ENCODE measurements at regions of chr1 and their contacts with region 1.

Region 1: GRCh38 chr1:33295450-33296081 is 25.3 kb downstream of the A3GALT2 start:
- DNase-seq: peak; percentile 86
- ATAC-seq: peak; percentile 91
- H3K4me3 ChIP-seq: no peak overlapping the region
- H3K4me3 Mint-ChIP-seq: no peak overlapping the region
- H3K27ac ChIP-seq: no peak overlapping the region
- H3K27ac Mint-ChIP-seq: peak overlapping the region; percentile 20
- H3K4me1 ChIP-seq: no peaks in the 10 kb centered on the region
- H3K4me1 Mint-ChIP-seq: no peaks in the 10 kb centered on the region
- H3K27me3 ChIP-seq: no peaks in the 10 kb centered on the region
- H3K27me3 Mint-ChIP-seq: no peaks in the 10 kb centered on the region
- CTCF ChIP-seq: peak; percentile 93

Region 2: DNA sequence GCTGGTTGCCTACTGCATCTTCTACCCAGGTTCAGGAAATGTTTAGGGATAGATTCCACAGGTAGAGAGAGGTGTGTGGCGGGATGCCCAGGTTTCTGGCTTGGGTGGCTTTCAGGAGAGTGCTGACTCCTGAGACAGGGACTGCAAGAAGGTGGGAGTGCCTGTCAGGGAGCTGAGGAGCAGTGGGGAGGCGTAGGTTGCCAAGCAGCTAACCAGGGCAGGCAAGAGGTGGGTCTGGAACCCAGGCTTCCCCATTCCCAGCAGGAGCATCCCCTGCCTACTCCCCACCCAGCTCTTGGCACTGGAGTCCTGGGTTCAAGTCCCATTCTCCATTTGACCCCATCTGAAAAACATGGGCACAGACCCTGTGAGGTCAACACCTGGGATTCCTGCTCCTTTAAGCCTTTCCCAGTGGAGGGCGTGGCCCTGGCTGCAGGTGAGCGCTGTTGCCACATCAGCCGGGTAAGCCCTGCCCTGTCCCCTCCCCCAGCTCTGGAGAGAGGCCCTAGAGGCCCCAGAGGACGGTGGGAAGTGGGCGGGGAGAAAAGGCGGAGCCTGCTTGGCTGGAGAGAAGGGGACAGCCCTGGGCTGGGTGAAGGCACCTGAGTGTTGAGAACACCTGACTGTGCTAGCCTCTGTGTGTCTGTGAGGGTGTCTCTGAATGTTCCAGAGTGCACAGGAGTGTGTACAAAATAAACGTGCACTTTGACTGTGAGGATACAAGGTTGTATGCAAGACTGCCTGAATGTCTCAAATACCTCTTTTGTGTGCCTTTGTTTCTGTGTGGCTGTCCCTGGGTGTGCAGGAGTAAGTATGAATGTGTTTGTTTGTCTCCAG is 579.0 kb before region 1 on chr1:
- CTCF ChIA-PET with region 1: no interaction called
- POLR2A ChIA-PET with region 1: no interaction called
- intact Hi-C with region 1: no loop called
- DNase-seq: peak; percentile 48
- ATAC-seq: peak; percentile 46
- H3K4me3 ChIP-seq: no peak overlapping the region
- H3K4me3 Mint-ChIP-seq: no peak overlapping the region
- H3K27ac ChIP-seq: no peak overlapping the region
- H3K27ac Mint-ChIP-seq: no peak overlapping the region
- H3K4me1 ChIP-seq: peaks cover 6 to 13% of the 10 kb centered on the region in 2 donors
- H3K4me1 Mint-ChIP-seq: peaks cover 7% of the 10 kb centered on the region
- H3K27me3 ChIP-seq: peaks cover 0 to 27% (median 3%) of the 10 kb centered on the region in 4 experiments
- H3K27me3 Mint-ChIP-seq: peaks cover 16% of the 10 kb centered on the region
- CTCF ChIP-seq: no peak

Region 3: GRCh38 chr1:33263890-33264504 is 31.6 kb before region 1 on chr1:
- CTCF ChIA-PET with region 1: no interaction called
- POLR2A ChIA-PET with region 1: no interaction called
- intact Hi-C with region 1: no loop called
- DNase-seq: no peak
- ATAC-seq: no peak
- H3K4me3 ChIP-seq: no peak overlapping the region
- H3K4me3 Mint-ChIP-seq: no peak overlapping the region
- H3K27ac ChIP-seq: no peak overlapping the region
- H3K27ac Mint-ChIP-seq: no peak overlapping the region
- H3K4me1 ChIP-seq: peaks cover 0 to 2% of the 10 kb centered on the region in 2 donors
- H3K4me1 Mint-ChIP-seq: peaks cover 16% of the 10 kb centered on the region
- H3K27me3 ChIP-seq: no peaks in the 10 kb centered on the region
- H3K27me3 Mint-ChIP-seq: no peaks in the 10 kb centered on the region
- CTCF ChIP-seq: no peak

Region 4: DNA sequence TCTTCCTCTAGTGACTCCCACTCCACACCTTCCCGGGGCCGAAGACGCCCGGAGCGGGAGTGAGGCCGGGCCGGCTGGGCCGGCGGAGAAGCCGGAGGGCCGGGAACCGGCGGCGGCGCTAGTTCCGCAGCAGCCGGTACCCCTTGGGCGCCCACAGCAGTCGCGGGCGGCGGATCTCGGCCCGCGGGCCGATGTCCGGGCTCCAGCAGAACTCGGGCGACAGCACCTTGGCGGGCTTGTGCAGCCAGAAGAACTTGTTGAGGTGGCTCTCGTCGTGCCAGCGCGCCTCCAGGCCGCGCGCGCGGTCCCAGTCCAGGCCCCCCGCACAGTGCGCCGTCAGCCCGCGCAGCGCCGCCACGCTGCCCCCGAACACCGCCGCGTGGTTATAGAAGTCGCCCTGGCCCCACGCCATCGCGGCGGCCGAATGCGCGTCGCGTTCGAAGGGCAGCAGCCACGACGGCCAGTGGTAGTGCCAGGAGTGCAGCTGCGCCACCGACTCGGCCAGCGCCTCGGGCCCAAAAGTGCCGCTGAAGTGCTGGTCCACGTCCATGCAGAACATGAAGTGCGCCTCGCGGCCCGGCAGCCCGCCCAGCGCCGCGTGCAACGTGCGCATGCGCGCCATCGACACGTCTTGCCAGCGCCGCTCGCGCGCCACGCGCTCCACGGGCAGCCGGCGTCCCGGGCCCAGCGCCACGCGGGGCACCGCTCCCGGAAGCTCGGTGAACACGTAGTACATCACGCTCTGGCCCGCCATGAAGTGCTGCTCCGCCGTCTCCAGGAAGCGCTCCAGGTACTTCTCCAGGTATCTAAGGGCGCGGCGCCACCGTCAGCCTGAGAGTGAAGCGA is 11.3 kb after region 1 on chr1:
- CTCF ChIA-PET with region 1: interaction called, 18 read pairs
- POLR2A ChIA-PET with region 1: no interaction called
- intact Hi-C with region 1: no loop called
- DNase-seq: peak; percentile 24
- ATAC-seq: no peak
- H3K4me3 ChIP-seq: no peak overlapping the region
- H3K4me3 Mint-ChIP-seq: no peak overlapping the region
- H3K27ac ChIP-seq: no peak overlapping the region
- H3K27ac Mint-ChIP-seq: no peak overlapping the region
- H3K4me1 ChIP-seq: peaks cover 3 to 11% of the 10 kb centered on the region in 2 donors
- H3K4me1 Mint-ChIP-seq: peaks cover 5% of the 10 kb centered on the region
- H3K27me3 ChIP-seq: peaks cover 0 to 10% (median 3%) of the 10 kb centered on the region in 4 experiments
- H3K27me3 Mint-ChIP-seq: peaks cover 20% of the 10 kb centered on the region
- CTCF ChIP-seq: no peak

Region 5: DNA sequence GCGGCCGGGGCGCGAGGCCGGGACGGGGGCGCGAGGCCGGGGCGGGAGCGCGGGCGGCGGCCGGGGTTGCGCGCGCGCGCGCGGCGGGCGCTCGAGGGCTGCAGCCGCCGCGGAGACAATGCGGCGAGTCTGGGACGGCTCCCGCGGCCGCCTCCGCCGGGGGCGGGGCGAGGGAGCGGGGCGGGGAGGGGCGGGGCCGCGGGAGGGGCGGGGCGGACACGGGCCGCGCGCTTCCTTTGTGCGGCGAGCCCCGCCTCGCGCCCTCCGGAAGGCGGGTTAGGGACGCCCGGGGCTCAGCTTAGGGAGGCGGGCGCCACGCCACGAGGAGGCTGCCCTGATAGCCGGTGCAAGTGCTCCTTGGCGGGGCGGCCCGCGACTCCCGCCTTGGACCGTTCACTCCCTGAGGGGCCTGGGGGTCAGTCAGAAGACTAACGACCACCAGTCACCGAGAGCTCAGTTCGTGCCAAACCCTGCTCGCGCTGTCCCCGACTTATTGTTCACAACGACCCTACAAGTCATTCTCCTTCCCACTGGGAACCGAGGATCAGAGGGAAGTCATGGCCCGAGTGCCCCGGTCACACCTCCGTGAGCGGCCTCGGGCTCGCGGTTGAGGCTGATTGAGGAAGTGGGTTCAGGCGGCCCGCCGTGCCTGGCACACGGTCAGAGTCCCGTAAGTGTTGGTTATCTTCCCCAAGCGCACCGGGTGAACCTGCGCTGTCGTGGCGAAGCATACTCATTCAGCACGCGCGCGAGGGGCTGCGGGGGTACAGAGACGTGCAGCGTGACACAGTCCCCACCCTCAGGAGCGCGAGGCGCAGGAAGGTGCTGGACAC is 54.4 kb after region 1 on chr1:
- CTCF ChIA-PET with region 1: interaction called, 7 read pairs
- POLR2A ChIA-PET with region 1: no interaction called
- intact Hi-C with region 1: loop called (anchors 5 kb)
- DNase-seq: peak; percentile 88
- ATAC-seq: peak; percentile 86
- H3K4me3 ChIP-seq: peak overlapping the region; percentile 45 to 76 (median 74)
- H3K4me3 Mint-ChIP-seq: peak overlapping the region; percentile 98
- H3K27ac ChIP-seq: peak overlapping the region; percentile 71 to 81
- H3K27ac Mint-ChIP-seq: peak overlapping the region; percentile 90
- H3K4me1 ChIP-seq: peaks cover 16 to 20% of the 10 kb centered on the region in 2 donors
- H3K4me1 Mint-ChIP-seq: peaks cover 36% of the 10 kb centered on the region
- H3K27me3 ChIP-seq: peaks cover 0 to 3% (median 0%) of the 10 kb centered on the region in 4 experiments
- H3K27me3 Mint-ChIP-seq: no peaks in the 10 kb centered on the region
- CTCF ChIP-seq: no peak

Region 6: DNA sequence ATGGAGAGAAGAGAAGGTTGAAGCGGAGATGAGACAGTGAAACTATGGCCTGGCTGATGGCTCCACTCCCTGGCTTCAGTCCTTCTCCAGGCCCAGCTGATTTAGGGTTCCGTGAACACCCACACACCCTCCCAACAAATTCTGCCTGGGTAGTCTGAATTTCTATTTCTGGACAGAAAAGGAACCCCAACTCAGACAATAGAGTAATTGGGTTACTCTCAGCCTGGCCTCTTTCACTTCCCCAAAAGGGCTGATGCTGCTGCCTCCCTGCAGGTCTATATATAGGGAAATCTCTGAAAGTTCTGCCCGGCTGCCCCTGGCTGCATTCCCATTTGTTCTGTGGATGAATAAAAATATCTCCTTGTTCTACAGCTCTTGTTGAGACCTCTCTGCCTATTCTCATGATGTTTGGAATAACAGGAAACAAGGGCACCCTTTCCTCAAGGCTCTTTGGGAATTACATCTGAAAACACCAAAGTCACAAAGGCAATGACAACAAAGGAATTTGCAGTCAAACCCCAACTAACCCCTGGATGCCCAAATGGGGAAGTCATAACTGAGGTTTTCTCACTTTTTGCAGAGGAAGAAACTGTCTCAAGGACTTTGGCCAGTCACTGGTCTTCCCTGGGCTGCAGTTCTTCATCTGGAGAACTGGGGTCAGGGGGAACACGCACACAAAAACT is 165.5 kb after region 1 on chr1:
- CTCF ChIA-PET with region 1: interaction called, 210 read pairs
- POLR2A ChIA-PET with region 1: no interaction called
- intact Hi-C with region 1: no loop called
- DNase-seq: peak; percentile 80
- ATAC-seq: peak; percentile 93
- H3K4me3 ChIP-seq: peak overlapping the region in 3 of 5 experiments; percentile 10 to 25 (median 21)
- H3K4me3 Mint-ChIP-seq: peak overlapping the region; percentile 80
- H3K27ac ChIP-seq: peak overlapping the region; percentile 56 to 64
- H3K27ac Mint-ChIP-seq: peak overlapping the region; percentile 87
- H3K4me1 ChIP-seq: peaks cover 38 to 43% of the 10 kb centered on the region in 2 donors
- H3K4me1 Mint-ChIP-seq: peaks cover 44% of the 10 kb centered on the region
- H3K27me3 ChIP-seq: no peaks in the 10 kb centered on the region
- H3K27me3 Mint-ChIP-seq: no peaks in the 10 kb centered on the region
- CTCF ChIP-seq: no peak

Region 7: DNA sequence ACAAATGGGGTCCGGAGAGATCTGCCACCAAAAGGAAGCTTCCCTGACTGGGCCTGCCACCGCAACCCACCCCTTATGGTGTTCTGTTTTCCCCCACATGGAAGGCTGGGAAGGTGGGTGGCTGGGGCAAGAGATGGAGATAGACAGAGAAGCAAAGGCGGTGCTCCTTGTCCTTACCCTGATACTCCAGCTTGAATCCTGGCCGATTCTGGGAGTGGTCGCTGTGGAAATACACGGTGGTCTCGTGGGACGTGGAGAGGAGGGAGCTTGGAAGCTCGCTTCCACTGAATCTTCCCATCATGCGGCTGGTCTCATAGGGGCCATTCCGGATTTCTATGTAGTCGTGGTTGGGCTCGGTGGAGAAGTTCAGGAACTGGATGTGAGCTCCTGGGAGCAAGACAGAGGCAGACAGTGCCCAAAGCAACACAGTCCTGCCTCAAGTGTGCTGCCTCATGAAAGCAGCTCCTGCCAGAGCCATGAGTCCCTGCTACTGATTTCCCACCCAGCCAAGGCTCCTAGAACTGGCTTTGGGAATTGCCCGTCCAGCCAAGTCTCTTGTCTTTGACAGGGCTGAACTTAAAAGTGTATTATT is 315.4 kb after region 1 on chr1:
- CTCF ChIA-PET with region 1: interaction called, 7 read pairs
- POLR2A ChIA-PET with region 1: no interaction called
- intact Hi-C with region 1: loop called (anchors 5 kb)
- DNase-seq: no peak
- ATAC-seq: no peak
- H3K4me3 ChIP-seq: no peak overlapping the region
- H3K4me3 Mint-ChIP-seq: no peak overlapping the region
- H3K27ac ChIP-seq: no peak overlapping the region
- H3K27ac Mint-ChIP-seq: no peak overlapping the region
- H3K4me1 ChIP-seq: no peaks in the 10 kb centered on the region
- H3K4me1 Mint-ChIP-seq: no peaks in the 10 kb centered on the region
- H3K27me3 ChIP-seq: peaks cover 0 to 4% (median 0%) of the 10 kb centered on the region in 4 experiments
- H3K27me3 Mint-ChIP-seq: peaks cover 9% of the 10 kb centered on the region
- CTCF ChIP-seq: no peak